PC-3 (cell line): ENCODE measurements at regions of chr2 and their contacts with region 1.

Region 1: DNA sequence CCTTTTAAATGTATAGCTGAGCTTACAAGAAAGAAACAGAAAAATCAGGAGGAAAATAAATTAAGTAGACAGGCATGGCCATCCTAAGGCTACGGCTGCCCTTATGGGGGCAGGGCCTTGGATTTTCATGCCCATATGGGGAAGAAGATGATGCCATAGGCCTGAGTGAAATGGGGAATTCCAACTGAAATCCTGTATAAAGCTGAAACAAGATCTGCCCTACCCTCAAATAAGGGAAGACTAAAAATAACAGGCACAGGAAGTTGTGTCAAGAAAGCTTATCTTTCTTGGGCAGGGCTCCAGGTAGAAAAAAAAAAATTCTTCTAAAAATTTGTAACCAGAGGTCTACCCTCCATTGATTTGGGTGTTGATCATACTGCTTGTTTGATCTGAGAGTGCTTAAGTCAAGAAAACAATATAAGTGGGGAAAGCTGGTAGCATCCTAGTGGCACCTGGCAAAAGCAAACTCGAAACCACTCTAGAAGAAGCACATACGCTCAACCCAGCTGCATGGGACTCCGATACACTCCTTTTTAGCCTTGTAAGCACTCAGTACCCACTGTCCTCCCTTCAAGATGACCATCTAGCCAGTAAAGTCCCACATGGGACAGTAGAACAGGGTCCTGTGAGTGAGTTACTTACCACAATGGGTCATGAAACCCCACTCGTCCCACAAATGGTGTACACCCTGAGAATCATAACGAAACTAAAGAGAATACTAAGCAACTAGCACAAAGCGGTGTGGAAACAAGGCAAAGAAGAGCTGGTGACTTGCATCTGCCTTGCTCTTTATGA is 22.3 kb downstream of the DNAH7 start:
- DNase-seq: no peak
- ATAC-seq: no peak
- H3K4me3 ChIP-seq: no peak overlapping the region
- H3K27ac ChIP-seq: no peak overlapping the region
- H3K4me1 ChIP-seq: no peaks in the 10 kb centered on the region
- H3K27me3 ChIP-seq: no peaks in the 10 kb centered on the region
- CTCF ChIP-seq: no peak

Region 2: DNA sequence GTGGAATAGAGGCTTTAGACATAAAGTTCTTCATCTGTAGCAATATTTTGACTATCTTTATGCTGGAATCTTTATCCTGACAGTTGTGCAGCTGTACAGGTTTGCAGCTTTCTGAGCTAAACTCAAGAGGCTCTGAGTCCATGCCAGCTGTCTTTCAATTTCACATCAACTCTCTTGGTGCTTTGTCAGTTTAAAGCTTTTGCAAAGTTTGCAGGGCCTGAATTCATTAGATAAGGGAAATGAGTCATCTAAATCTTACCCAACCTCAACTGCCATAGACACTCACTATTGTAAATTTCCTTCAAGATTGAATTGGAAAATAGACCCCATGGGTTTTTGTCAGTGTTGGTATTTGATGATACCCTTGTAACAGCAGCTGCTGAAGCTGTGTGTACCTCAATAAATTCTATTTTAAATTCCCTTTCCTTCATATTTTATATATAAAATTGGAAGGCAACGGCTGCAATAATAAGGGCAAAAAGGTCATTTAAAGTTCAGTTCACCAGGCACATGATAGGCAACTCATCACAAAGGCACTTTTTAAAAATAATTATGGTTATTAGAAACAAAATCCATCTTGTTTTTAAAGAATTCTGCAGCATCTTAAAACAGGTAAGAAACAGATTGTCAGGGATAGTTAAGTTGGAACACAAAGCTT is 559.2 kb before region 1 on chr2:
- CTCF ChIA-PET with region 1: no interaction called
- POLR2A ChIA-PET with region 1: no interaction called
- intact Hi-C with region 1: loop called (anchors 10 kb)
- DNase-seq: peak; percentile 75
- ATAC-seq: peak; percentile 69
- H3K4me3 ChIP-seq: no peak overlapping the region
- H3K27ac ChIP-seq: no peak overlapping the region
- H3K4me1 ChIP-seq: peaks cover 16% of the 10 kb centered on the region
- H3K27me3 ChIP-seq: no peaks in the 10 kb centered on the region
- CTCF ChIP-seq: no peak

Region 3: GRCh38 chr2:195929531-195929930 is 116.8 kb before region 1 on chr2:
- CTCF ChIA-PET with region 1: no interaction called
- POLR2A ChIA-PET with region 1: no interaction called
- intact Hi-C with region 1: no loop called
- DNase-seq: no peak
- ATAC-seq: no peak
- H3K4me3 ChIP-seq: no peak overlapping the region
- H3K27ac ChIP-seq: no peak overlapping the region
- H3K4me1 ChIP-seq: peaks cover 5% of the 10 kb centered on the region; the same call in 1 of the 2 replicates
- H3K27me3 ChIP-seq: no peaks in the 10 kb centered on the region
- CTCF ChIP-seq: no peak

Region 4: DNA sequence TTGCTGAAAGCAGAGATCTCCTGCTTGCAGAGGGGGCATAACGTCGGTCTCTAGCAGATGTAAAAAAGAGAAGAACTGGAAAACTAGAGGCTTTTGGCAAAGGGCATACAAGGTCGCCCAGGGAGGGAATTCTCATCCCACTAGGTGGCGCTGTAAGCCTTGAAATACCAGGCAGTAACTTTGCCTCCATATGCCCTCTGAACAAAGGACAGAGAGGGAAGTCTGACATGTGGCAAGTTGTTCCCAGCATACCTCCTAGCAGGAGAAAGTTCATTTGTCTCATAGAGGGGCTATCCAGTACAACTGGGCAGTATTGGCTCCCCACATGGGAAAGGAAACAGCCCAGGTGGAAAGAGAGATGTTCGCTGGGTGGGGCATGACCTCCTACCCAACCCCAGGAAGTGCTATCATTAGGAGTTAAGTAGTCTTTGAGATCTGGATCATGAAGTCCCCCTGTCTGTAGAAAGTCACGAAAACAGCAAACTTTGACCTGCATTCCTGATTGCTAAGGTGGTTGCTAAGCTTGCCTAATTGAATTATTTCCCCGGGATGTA is 85.1 kb after region 1 on chr2:
- CTCF ChIA-PET with region 1: no interaction called
- POLR2A ChIA-PET with region 1: no interaction called
- intact Hi-C with region 1: no loop called
- DNase-seq: peak; percentile 71
- ATAC-seq: peak; percentile 65
- H3K4me3 ChIP-seq: no peak overlapping the region
- H3K27ac ChIP-seq: no peak overlapping the region
- H3K4me1 ChIP-seq: no peaks in the 10 kb centered on the region
- H3K27me3 ChIP-seq: no peaks in the 10 kb centered on the region
- CTCF ChIP-seq: peak; percentile 72